ENCODE measurements at regions of chr6 and their contacts with region 1.

Region 1: GRCh38 chr6:97186416-97186999 is 96.5 kb downstream of the MMS22L start:
- DNase-seq: peak; percentile 89
- H3K4me3 Mint-ChIP-seq: no peak overlapping the region
- H3K27ac Mint-ChIP-seq: no peak overlapping the region
- H3K4me1 Mint-ChIP-seq: no peaks in the 10 kb centered on the region
- H3K27me3 Mint-ChIP-seq: no peaks in the 10 kb centered on the region

Region 2: GRCh38 chr6:97068211-97068610 is 118.3 kb before region 1 on chr6:
- intact Hi-C with region 1: loop called (anchors 2 kb)
- DNase-seq: peak; percentile 59
- H3K4me3 Mint-ChIP-seq: no peak overlapping the region
- H3K27ac Mint-ChIP-seq: no peak overlapping the region
- H3K4me1 Mint-ChIP-seq: peaks cover 6% of the 10 kb centered on the region
- H3K27me3 Mint-ChIP-seq: no peaks in the 10 kb centered on the region

Region 3: GRCh38 chr6:97282726-97283617 is 96.5 kb after region 1 on chr6 and contains the start of gene MMS22L:
- intact Hi-C with region 1: loop called (anchors 5 kb)
- DNase-seq: peak; percentile 98
- H3K4me3 Mint-ChIP-seq: peak within 1 kb of the TSS; percentile 91
- H3K27ac Mint-ChIP-seq: peak within 1 kb of the TSS; percentile 94
- H3K4me1 Mint-ChIP-seq: peaks cover 23% of the 10 kb centered on the region
- H3K27me3 Mint-ChIP-seq: peaks cover 11% of the 10 kb centered on the region
- total RNA-seq, gene MMS22L: 54.8 and 65.2 TPM in 2 replicates

Region 4: DNA sequence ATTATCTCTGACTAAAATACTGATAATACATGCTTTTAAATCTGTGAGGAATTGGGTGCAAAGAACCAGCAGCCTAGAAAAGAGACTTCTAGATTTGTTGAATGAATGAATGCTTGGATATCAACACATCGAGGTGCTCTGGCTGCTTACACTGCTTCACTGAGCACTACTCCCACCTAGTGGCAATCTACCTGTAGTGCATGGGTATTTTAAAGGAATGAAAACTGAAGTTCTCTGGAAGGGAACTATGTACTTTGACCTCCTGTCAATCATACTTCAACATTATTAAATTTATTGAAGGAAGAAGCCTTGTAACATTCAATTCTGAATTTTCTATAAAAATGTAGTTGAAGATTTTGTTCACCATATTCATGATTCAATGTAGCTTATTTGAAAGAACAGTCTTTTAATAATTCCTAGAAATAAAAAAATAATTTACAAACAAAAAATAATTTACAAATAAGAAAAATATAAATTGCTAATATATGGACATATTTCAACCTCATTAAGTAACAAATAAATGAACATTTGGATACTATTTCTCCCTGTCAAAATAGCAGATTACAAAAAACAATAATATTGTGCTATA is 207.7 kb after region 1 on chr6:
- intact Hi-C with region 1: loop called (anchors 1 kb)
- DNase-seq: peak; percentile 84
- H3K4me3 Mint-ChIP-seq: no peak overlapping the region
- H3K27ac Mint-ChIP-seq: no peak overlapping the region
- H3K4me1 Mint-ChIP-seq: no peaks in the 10 kb centered on the region
- H3K27me3 Mint-ChIP-seq: peaks cover 14% of the 10 kb centered on the region

Region 5: DNA sequence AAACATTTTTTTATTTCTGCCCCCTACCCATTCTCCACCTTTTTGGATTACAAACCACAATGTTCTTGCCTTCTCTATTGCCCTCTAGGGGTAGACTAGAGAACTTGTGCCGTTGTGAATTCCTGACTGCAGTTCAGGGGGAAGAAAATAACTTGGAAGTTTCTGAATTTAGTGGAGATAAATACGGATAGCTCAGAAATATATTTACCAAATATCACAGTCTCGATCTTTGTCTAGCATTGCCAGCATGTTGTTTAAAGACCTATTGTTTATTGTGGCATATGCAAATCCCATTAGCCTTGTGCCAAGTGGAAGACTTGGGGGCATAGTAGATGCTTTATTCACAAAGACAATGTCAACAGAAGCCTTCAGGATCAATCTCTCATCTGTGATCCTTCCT is 250.6 kb after region 1 on chr6:
- intact Hi-C with region 1: loop called (anchors 2 kb)
- DNase-seq: no peak
- H3K4me3 Mint-ChIP-seq: no peak overlapping the region
- H3K27ac Mint-ChIP-seq: no peak overlapping the region
- H3K4me1 Mint-ChIP-seq: no peaks in the 10 kb centered on the region
- H3K27me3 Mint-ChIP-seq: peaks cover 5% of the 10 kb centered on the region

Measured in activated CD4-positive, alpha-beta T cell treated with anti-CD3 and anti-CD28 coated beads, Interleukin-2, amount 10 ng/mL, durations not matched to agents 24 days and 14 days (primary cell).